Dorsolateral prefrontal cortex (tissue), 120 donors: ENCODE measurements at regions of chr5 and their contacts with region 1.

Region 1: DNA sequence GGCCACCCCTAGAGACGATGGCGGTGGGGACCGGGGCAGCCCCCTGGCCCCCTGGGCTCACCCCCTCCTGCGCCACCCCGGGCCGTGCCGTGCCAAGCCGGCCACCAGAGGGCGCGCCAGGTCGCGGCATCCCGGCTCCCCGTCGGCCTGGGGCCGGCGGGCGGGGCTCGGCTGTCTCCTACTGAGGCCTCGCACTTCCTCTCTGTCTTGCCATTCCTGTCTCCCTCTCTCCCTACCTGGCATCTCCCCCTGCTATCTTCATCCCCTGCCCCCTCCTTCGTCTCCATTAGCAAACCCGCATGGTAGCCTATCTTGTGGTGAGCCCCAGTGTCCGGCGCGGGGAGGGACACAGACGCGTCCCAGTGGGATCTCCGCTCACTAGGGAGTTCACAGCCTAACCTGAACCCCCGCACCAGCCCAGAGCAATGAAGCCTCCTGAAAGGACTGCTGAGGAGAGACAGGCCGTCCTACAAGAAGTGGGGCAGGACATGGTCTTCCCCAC is 29.8 kb upstream of the FABP6 start:
- DNase-seq: peak; percentile 41 to 87 (median 66)
- H3K4me3 ChIP-seq: peak overlapping the region; percentile 19 to 71 (median 53)
- H3K27ac ChIP-seq: peak overlapping the region in 6 of 59 donors; percentile 22 to 73 (median 39)
- H3K27me3 ChIP-seq: no peaks in the 10 kb centered on the region
- CTCF ChIP-seq: peak; percentile 64 to 99 (median 94)

Region 2: GRCh38 chr5:160021831-160022446 is 177.5 kb before region 1 on chr5:
- intact Hi-C with region 1: loop called (anchors 5 kb)
- DNase-seq: peak in 2 of 10 donors; percentile 52 to 72
- H3K4me3 ChIP-seq: peak overlapping the region in 5 of 59 donors; percentile 19 to 39 (median 28)
- H3K27ac ChIP-seq: peak overlapping the region in 4 of 59 donors; percentile 11 to 51 (median 32)
- H3K27me3 ChIP-seq: no peaks in the 10 kb centered on the region
- CTCF ChIP-seq: peak; percentile 75 to 98 (median 89)

Region 3: GRCh38 chr5:160119142-160119904 is 80.1 kb before region 1 on chr5 and contains the start of gene PWWP2A:
- intact Hi-C with region 1: loop called in 1 of 2 experiments (anchors 5 kb)
- DNase-seq: peak; percentile 95 to 100 (median 99)
- H3K4me3 ChIP-seq: peak within 1 kb of the TSS; percentile 55 to 99 (median 95)
- H3K27ac ChIP-seq: peak within 1 kb of the TSS; percentile 90 to 100 (median 99)
- H3K27me3 ChIP-seq: no peaks in the 10 kb centered on the region
- CTCF ChIP-seq: peak in 27 of 56 donors; percentile 3 to 44 (median 19)
- total RNA-seq, gene PWWP2A: 24.0 to 72.7 (median 40.0) TPM

Region 4: DNA sequence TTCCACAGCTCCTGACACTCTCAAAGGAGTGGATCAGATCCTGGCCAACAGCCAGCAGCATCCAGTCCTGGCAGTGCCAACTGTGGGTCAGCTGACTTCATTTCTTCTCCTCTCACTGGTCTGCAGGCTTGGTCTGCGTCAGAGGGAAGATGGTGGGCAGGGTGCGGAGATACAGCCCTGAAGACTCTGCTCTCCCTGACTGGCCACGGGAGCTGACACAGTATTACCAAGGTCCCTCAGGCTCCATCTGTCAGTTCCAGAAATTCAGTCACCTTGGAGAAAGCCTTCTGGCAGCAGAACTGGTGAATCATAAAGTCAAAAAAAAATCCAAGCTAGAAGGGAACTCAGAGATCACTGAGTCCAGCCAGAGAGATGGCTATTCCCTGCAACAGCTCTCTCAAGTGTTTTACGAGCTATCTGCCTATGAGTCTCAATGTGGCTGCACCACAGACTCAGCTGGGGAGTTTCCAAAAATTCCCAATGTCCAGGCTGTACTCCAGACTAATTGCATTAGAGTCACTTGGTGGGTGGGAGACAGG is 143.0 kb after region 1 on chr5:
- intact Hi-C with region 1: loop called (anchors 2 kb)
- DNase-seq: peak in 1 of 10 donors; percentile 60
- H3K4me3 ChIP-seq: no peak overlapping the region
- H3K27ac ChIP-seq: peak overlapping the region in 1 of 59 donors; percentile 85
- H3K27me3 ChIP-seq: no peaks in the 10 kb centered on the region
- CTCF ChIP-seq: no peak

Region 5: DNA sequence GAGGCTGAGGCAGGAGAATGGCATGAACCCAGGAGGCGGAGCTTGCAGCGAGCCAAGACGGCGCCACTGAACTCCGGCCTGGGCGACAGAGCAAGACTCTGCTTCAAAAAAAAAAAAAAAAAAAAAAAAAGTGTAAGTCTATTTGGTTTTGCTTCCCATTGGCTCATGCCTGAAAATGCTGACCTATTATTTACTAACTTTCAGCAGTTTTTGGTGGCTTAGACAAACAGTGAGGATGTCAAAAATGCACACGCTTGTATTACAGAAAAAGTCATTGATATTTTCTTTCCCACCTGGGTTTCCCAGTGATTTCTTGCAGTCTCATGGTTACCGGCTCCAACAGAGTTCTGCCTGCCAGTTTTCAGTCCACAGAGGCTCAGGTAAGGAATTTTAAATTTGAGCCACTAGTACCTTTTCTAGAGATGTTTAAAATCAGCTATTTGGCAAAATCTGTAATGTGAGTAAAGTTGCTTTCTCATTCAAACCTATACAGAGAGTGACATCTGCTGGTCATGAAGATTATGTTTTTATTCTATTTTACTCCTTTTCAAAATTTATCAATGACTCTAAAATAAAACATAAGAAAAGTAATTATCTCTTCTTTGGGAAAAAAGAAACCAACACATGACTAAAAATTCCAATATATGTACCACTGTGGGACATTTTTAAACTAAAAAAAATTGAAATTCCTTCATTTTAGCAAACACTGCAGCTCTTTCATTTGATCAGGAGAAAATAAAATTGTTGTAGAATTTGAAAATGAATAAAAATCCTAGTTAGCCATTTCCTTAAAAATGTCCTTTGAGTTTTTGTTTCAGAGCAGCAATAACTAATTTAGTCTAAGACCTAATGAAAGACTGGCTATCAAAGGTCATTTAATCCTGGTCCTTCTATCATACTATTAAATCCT is 191.6 kb after region 1 on chr5:
- intact Hi-C with region 1: loop called in 1 of 2 experiments (anchors 5 kb)
- DNase-seq: no peak
- H3K4me3 ChIP-seq: no peak overlapping the region
- H3K27ac ChIP-seq: no peak overlapping the region
- H3K27me3 ChIP-seq: no peaks in the 10 kb centered on the region
- CTCF ChIP-seq: peak in 55 of 56 donors; percentile 21 to 77 (median 57)

Region 6: DNA sequence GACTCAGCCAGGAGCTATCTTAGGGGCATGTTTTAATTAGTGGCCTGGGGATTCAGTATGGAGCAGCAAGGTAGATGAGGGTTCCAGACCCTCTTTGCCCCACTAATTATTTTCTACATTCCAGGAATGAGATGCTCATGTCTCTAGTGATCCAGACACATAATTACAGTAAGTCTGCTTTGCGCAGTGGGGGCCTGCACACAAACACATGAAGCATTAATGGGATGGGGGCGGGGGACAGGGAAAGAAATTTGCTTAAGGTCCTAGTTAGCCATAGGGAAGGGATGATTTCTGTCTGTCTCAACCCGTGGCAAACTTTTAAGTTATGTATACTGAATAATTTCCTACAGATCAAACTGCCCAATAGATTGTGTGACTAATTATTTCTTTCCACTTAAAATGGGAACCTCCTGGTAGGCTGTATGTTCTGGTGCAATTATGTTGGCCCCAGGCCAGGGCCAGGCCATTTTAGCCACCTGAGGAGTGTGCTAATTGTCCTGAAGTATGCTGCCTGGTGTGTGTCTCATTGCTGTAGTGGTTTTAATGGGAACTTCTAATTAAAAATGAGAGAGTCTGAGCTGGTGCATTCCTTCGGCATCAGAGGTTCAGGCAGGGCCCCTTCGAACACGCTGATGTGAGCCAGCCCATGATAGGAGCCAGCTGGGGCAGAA is 356.6 kb after region 1 on chr5:
- intact Hi-C with region 1: no loop called
- DNase-seq: no peak
- H3K4me3 ChIP-seq: no peak overlapping the region
- H3K27ac ChIP-seq: peak overlapping the region in 1 of 59 donors; percentile 20
- H3K27me3 ChIP-seq: no peaks in the 10 kb centered on the region
- CTCF ChIP-seq: no peak